HCT116 (cell line): ENCODE measurements at regions of chr5 and their contacts with region 1.

Region 1: GRCh38 chr5:73519531-73520283 is 21.5 kb downstream of the BTF3 start:
- DNase-seq: peak; percentile 85
- ATAC-seq: peak; percentile 99
- H3K4me3 ChIP-seq: peak overlapping the region; percentile 15 to 17; a peak in 2 of 4 replicates
- H3K27ac ChIP-seq: no peak overlapping the region
- H3K4me1 ChIP-seq: peaks cover 8 to 10% of the 10 kb centered on the region in 2 experiments; a peak in 2 of 4 replicates
- H3K27me3 ChIP-seq: no peaks in the 10 kb centered on the region
- CTCF ChIP-seq: peak; percentile 65 to 85 (median 82); a peak in 5 of 6 replicates
- POLR2A ChIP-seq: no peak
- RAD21 ChIP-seq: peak; percentile 83

Region 2: GRCh38 chr5:73303148-73304079 is 216.3 kb before region 1 on chr5:
- CTCF ChIA-PET with region 1: no interaction called
- POLR2A ChIA-PET with region 1: no interaction called
- RAD21 ChIA-PET with region 1: no interaction called
- intact Hi-C with region 1: no loop called
- DNase-seq: no peak
- ATAC-seq: no peak
- H3K4me3 ChIP-seq: no peak overlapping the region
- H3K27ac ChIP-seq: no peak overlapping the region
- H3K4me1 ChIP-seq: peaks cover 0 to 10% of the 10 kb centered on the region in 2 experiments; a peak in 1 of 4 replicates
- H3K27me3 ChIP-seq: no peaks in the 10 kb centered on the region
- CTCF ChIP-seq: no peak
- POLR2A ChIP-seq: no peak
- RAD21 ChIP-seq: no peak

Region 3: DNA sequence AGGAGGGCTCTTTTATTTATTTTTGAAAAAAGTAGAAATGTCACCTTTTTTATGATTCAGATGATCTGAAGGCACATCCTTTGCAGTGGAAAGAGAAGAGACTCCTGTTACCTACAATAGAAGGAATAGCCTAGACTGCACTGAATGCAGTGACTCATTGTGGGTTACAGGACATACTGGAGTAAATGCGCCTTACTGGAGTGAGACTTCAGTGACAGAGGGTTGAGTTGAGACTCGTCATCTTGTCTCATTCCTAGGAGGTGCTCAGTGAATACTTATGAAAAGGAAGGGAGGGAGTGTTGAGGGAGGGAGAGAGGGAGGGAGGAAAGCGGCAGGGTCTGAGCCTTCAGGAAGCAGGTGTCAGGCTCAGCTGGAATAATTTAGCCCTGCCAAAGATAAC is 20.5 kb after region 1 on chr5:
- CTCF ChIA-PET with region 1: interaction called, 14 read pairs
- POLR2A ChIA-PET with region 1: no interaction called
- RAD21 ChIA-PET with region 1: no interaction called
- intact Hi-C with region 1: loop called (anchors 1 kb)
- DNase-seq: no peak
- ATAC-seq: no peak
- H3K4me3 ChIP-seq: no peak overlapping the region
- H3K27ac ChIP-seq: no peak overlapping the region
- H3K4me1 ChIP-seq: peaks cover 0 to 4% of the 10 kb centered on the region in 2 experiments; a peak in 1 of 4 replicates
- H3K27me3 ChIP-seq: no peaks in the 10 kb centered on the region
- CTCF ChIP-seq: no peak
- POLR2A ChIP-seq: no peak
- RAD21 ChIP-seq: no peak

Region 4: DNA sequence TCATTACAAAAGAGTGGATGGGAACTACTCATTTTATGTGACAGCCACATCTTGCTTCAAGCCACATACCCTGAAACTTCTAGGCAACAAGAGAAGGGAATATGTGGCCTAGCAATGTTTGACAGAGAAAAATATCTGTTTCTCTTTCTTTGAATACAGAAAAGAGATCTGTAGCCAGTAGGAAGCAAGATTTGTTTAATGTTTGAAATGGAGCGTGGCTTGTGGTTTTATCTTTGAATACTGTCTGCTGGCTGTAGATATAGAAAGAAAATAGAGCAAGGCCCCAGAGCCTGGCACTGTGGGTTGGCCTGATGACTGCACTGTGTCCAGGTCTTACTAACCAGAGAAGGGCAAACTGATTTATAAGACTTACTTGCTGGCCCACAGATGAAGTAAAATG is 240.1 kb after region 1 on chr5:
- CTCF ChIA-PET with region 1: no interaction called
- POLR2A ChIA-PET with region 1: no interaction called
- RAD21 ChIA-PET with region 1: no interaction called
- intact Hi-C with region 1: no loop called
- DNase-seq: no peak
- ATAC-seq: no peak
- H3K4me3 ChIP-seq: no peak overlapping the region
- H3K27ac ChIP-seq: no peak overlapping the region
- H3K4me1 ChIP-seq: peaks cover 0 to 5% of the 10 kb centered on the region in 2 experiments; a peak in 1 of 4 replicates
- H3K27me3 ChIP-seq: no peaks in the 10 kb centered on the region
- CTCF ChIP-seq: no peak
- POLR2A ChIP-seq: no peak
- RAD21 ChIP-seq: no peak